Mammary epithelial cell (primary cell): ENCODE measurements at regions of chr1 and their contacts with region 1.

Region 1: GRCh38 chr1:9128520-9129265 is at the start of gene GPR157:
- DNase-seq: peak; percentile 72
- H3K4me3 ChIP-seq: peak within 1 kb of the TSS; percentile 51 to 78 (median 55)
- H3K27ac ChIP-seq: peak within 1 kb of the TSS; percentile 3
- H3K4me1 ChIP-seq: peaks cover 19% of the 10 kb centered on the region
- H3K27me3 ChIP-seq: no peaks in the 10 kb centered on the region
- CTCF ChIP-seq: peak in 1 of 2 donors; percentile 15
- total RNA-seq, gene GPR157: 7.2 to 10.4 TPM

Region 2: GRCh38 chr1:8878448-8879347 is 250.0 kb before region 1 on chr1 and contains the start of gene ENO1:
- CTCF ChIA-PET with region 1: no interaction called
- dilution Hi-C with region 1: no loop called
- in situ Hi-C with region 1: no loop called
- intact Hi-C with region 1: loop called (anchors 1 kb)
- DNase-seq: peak; percentile 97
- H3K4me3 ChIP-seq: peak within 1 kb of the TSS; percentile 55 to 71 (median 66)
- H3K27ac ChIP-seq: peak within 1 kb of the TSS; percentile 93
- H3K4me1 ChIP-seq: peaks cover 38% of the 10 kb centered on the region
- H3K27me3 ChIP-seq: no peaks in the 10 kb centered on the region
- CTCF ChIP-seq: no peak
- total RNA-seq, gene ENO1: 1,459 to 2,190 TPM

Region 3: DNA sequence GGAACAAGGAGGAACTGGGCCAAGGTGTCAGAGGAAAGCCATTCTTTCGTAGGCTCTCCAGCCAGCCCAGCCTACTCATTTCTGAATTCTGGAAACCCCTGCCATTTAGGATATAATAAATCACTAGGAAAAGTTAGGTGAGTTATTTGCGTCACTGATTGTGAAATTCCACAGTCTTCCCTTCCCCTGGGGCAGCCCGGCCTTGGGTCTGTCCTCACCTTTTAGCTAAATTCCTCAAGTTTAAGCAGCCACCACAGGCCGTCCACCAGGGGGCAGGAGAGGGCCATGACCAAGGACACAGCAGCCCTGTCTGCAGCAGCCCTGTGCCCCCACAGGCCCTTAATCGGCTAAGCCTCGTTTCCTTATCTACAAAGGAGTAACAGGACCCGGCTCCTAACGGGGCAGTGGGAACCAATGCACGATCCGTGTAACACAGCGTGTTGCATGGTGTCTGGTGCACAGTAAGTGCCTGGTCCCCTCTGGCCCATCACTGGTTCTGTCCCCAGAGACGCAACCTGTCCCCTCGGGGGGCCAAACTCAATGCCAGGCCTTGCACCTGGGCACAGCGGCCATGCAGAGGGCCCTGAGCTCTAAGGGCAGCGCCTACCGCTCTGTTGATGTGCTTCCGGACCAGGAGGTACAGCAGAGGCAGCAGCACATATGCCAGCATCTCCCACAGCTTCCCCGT is 17.9 kb before region 1 on chr1:
- CTCF ChIA-PET with region 1: no interaction called
- dilution Hi-C with region 1: no loop called
- in situ Hi-C with region 1: no loop called
- intact Hi-C with region 1: loop called (anchors 2 kb)
- DNase-seq: peak; percentile 97
- H3K4me3 ChIP-seq: no peak overlapping the region
- H3K27ac ChIP-seq: no peak overlapping the region
- H3K4me1 ChIP-seq: peaks cover 13% of the 10 kb centered on the region
- H3K27me3 ChIP-seq: no peaks in the 10 kb centered on the region
- CTCF ChIP-seq: peak; percentile 87 to 93